Naive thymus-derived CD4-positive, alpha-beta T cell (primary cell): ENCODE measurements at regions of chr12 and their contacts with region 1.

Region 1: DNA sequence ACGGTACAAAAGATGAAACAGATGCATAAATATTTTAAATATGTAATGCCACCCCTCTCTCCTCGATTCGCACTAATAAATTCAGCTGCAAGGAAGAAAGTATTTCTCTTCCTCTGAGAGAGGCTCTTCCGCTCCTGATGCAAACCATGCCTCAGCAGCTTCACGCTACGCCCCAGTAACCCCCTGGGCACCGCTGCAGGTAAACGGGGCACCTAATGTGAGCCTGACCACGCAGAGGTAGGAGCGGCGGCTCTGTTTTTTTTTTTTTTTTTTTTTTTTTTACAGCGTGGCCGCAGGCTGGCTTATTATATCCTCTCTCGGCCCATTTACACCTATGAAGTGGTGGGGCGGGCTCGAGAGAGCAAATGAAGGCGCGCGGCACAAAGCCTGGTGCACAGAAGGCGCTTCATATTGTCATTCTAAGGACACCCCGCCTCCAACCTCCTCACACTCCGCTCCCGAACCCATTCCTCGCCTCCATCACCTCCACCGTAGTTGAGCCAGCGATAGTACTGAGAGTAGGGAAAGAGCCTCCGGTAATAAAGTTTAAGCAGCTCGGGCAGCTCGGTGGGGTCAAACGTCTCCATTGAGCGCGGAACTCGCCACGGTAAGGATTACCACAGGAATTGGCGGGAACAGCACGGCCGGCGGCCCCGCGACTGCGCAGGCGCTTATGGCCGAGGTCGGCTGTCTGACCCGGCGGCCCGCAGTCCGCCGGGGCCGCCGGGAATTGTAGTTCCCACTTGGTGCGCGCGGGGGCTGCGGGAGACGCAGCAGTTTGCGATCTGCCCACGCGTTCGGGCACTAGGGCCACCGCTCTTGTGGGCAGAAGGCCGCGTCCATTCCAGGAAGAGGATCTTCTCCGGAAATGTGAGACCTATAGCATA is at the start of gene PRIM1:
- DNase-seq: peak; percentile 69 to 91 (median 78)
- ATAC-seq: peak; percentile 93
- H3K4me3 ChIP-seq: peak within 1 kb of the TSS; percentile 98
- H3K4me3 Mint-ChIP-seq: peak within 1 kb of the TSS; percentile 88 to 98 (median 97)
- H3K27ac ChIP-seq: peak within 1 kb of the TSS; percentile 81
- H3K27ac Mint-ChIP-seq: peak within 1 kb of the TSS; percentile 80 to 99 (median 93)
- H3K4me1 ChIP-seq: peaks cover 3 to 7% of the 10 kb centered on the region in 2 donors
- H3K4me1 Mint-ChIP-seq: peaks cover 22 to 46% (median 42%) of the 10 kb centered on the region in 7 donors
- H3K27me3 ChIP-seq: no peaks in the 10 kb centered on the region
- H3K27me3 Mint-ChIP-seq: no peaks in the 10 kb centered on the region
- total RNA-seq, gene PRIM1: 11.5 to 39.8 (median 26.2) TPM

Region 2: DNA sequence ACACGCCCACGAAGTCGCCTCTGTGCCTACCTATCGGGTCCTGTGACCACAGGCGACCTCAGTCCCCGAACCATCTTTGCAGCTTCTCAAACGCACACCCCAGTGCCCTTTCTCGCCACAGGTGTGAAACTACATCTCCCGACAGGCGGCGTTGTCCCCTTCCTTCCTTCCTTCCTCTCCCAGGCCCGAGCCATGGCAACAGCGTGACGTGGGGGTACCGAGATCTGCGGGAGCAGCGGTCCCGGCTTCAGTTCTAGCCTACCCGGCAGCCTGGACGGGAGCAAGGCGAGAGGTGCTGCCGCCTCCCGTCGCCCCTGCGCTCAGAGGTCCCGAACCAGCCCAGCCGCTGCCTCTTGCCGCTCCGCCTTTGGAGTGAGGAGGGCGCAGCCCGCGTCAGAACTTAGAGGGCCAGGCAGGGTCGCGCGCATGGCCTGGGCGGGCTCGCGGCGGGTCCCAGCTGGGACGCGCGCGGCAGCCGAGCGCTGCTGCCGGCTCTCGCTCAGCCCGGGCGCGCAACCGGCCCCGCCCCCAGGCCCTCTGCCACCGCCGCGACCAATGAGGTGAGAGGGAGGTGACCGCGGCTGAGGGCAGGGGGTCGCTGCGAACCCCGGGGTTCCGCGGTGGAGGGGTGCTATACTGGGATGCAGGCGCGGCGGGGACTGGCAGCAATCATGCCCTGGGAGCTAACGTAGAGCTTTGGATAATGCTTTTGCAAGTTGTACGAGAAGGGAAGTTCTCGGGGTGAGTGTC is 485.1 kb before region 1 on chr12 and contains the start of gene COQ10A:
- CTCF ChIA-PET with region 1: no interaction called
- POLR2A ChIA-PET with region 1: no interaction called
- intact Hi-C with region 1: no loop called
- DNase-seq: peak; percentile 78 to 92 (median 89)
- ATAC-seq: peak; percentile 93
- H3K4me3 ChIP-seq: peak within 1 kb of the TSS; percentile 88
- H3K4me3 Mint-ChIP-seq: peak within 1 kb of the TSS; percentile 83 to 100 (median 96)
- H3K27ac ChIP-seq: peak within 1 kb of the TSS; percentile 94
- H3K27ac Mint-ChIP-seq: peak within 1 kb of the TSS; percentile 89 to 97 (median 94)
- H3K4me1 ChIP-seq: peaks cover 0 to 8% of the 10 kb centered on the region in 2 donors
- H3K4me1 Mint-ChIP-seq: peaks cover 0 to 22% (median 20%) of the 10 kb centered on the region in 7 donors
- H3K27me3 ChIP-seq: no peaks in the 10 kb centered on the region
- H3K27me3 Mint-ChIP-seq: peaks cover 0 to 2% (median 0%) of the 10 kb centered on the region in 5 donors
- total RNA-seq, gene COQ10A: 22.5 to 39.4 (median 31.5) TPM

Region 3: DNA sequence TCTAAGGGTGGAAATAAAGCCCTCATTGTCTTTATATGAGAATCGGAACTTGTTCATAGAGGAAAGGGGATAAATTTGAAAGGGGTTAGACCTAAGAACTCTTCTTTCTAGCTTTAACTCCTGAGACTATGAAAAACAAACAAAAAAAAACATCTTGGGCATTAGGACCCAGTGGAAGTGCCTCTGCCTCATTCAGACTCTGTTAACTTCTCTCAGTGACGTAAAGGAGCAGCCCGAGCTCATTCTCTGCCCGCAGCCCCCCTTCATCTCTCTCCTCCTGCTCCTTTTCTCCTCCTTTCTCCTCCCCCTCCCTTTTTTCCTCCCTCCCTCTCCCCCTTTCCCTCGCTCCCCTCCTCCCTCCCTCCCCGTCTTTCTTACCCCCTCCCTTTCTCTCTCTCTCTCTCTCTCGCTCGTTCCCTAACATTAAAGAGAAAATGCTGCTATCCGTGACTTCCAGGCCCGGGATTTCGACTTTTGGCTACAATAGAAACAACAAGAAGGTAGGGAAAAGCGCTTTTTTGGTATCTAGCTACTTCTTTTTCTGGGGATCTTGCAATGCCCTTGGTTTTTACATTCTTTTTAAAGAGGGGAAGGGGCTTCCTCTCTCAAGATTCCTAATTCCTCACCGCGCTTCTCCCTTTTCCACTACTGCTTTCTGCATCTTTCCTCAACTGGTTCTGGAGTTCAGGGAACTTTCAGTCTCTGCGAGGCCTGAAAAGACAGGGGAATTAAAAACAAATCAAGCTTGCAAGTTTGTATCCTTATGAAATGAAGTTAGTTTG is 230.2 kb before region 1 on chr12 and contains the start of gene RBMS2:
- CTCF ChIA-PET with region 1: no interaction called
- POLR2A ChIA-PET with region 1: no interaction called
- intact Hi-C with region 1: loop called in 1 of 2 experiments (anchors 2 kb)
- DNase-seq: peak in 8 of 9 donors; percentile 23 to 74 (median 58)
- ATAC-seq: peak; percentile 97
- H3K4me3 ChIP-seq: peak within 1 kb of the TSS; percentile 44
- H3K4me3 Mint-ChIP-seq: peak within 1 kb of the TSS; percentile 79 to 98 (median 91)
- H3K27ac ChIP-seq: peak within 1 kb of the TSS; percentile 70
- H3K27ac Mint-ChIP-seq: peak within 1 kb of the TSS; percentile 60 to 97 (median 82)
- H3K4me1 ChIP-seq: peaks cover 6 to 23% of the 10 kb centered on the region in 2 donors
- H3K4me1 Mint-ChIP-seq: peaks cover 25 to 40% (median 37%) of the 10 kb centered on the region in 7 donors
- H3K27me3 ChIP-seq: no peaks in the 10 kb centered on the region
- H3K27me3 Mint-ChIP-seq: peaks cover 0 to 2% (median 0%) of the 10 kb centered on the region in 5 donors
- total RNA-seq, gene RBMS2: 2.5 to 12.8 (median 5.5) TPM

Region 4: DNA sequence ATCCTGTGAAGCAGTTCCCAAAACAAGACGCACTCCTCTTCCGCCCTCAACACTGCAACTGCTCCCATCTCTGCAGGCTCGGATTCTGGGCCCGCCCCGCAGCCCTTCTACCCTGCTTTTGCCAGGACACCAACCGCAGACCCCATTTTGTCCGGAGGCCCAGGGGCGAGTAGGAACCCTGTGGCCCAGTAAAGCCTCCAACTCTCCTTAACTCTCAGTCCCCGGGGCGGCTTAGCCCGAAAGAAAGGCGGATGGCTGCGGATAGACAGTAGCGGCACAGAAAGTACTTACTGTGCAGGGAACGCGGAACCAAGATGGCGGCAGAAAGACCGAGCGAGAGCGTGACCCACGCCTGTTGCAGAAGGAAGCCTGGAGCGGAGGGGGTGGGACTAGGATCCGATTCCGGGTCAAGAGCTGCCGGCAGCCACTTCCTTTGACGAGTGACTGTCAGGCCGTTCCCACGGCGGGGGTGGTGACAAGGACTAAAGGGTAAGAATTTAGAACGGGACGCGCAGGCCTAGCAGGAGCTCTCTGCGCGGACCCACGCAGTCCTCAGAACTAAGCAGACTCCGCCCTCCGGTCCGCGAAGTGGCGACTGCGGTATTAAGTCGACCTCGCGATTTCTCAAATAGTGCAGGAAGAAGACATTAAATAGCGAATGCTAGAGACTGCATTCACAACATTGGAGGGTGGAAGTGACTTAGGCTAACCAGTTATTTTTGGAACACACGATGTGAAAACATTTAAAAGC is 26.8 kb before region 1 on chr12 and contains the start of gene NACA:
- CTCF ChIA-PET with region 1: interaction called, 6 read pairs
- POLR2A ChIA-PET with region 1: interaction called, 17 read pairs
- intact Hi-C with region 1: loop called (anchors 1 kb)
- DNase-seq: peak; percentile 85 to 99 (median 96)
- ATAC-seq: peak; percentile 95
- H3K4me3 ChIP-seq: peak within 1 kb of the TSS; percentile 100
- H3K4me3 Mint-ChIP-seq: peak within 1 kb of the TSS; percentile 94 to 100 (median 97)
- H3K27ac ChIP-seq: peak within 1 kb of the TSS; percentile 87
- H3K27ac Mint-ChIP-seq: peak within 1 kb of the TSS; percentile 94 to 100 (median 98)
- H3K4me1 ChIP-seq: peaks cover 40 to 43% of the 10 kb centered on the region in 2 donors
- H3K4me1 Mint-ChIP-seq: peaks cover 39 to 53% (median 49%) of the 10 kb centered on the region in 7 donors
- H3K27me3 ChIP-seq: no peaks in the 10 kb centered on the region
- H3K27me3 Mint-ChIP-seq: no peaks in the 10 kb centered on the region
- total RNA-seq, gene NACA: 834 to 1,486 (median 1,355) TPM

Region 5: DNA sequence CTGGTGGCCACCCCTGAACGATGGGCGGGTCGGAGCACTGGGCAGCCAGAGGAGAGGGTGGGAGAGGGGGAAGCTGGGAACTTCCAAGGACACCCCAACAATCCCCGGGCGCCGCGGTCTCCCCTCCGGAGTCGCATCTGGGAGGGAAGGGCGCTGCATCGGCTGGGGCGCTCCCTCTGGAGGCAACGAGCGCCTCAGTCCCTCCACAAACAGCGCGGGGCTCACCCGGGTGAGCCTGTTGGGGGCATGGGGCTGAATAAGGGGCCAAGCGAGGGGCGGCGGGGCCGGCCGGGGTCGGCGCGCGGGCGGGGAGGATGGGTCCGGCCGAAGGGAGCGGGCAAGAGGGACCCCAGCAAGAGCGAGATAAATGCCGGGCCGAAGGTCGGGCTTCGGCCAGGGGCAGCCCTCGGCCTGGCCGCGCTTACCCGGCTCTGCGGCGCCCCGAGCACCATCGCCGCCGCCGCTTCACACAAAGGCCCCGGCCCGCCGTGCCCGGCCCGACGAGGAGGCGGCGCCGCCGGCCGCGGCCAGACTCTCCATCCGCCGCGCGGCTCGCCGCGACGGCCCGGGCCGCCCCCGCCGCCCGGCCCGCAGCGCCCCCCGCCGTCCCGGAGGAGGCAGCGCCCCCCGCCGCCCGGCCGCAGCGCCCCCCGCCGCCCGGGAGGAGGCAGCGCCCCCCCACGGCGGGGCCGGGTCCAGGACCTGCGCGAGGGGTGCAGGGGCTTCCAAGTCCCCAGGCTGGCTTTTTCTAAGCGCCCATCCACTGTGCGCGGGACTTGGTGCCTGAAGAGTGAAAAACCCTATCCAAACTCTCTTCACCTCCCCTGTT is 254.2 kb after region 1 on chr12 and contains the start of gene ZBTB39:
- CTCF ChIA-PET with region 1: interaction called, 8 read pairs
- POLR2A ChIA-PET with region 1: interaction called, 3 read pairs
- intact Hi-C with region 1: loop called (anchors 1 kb)
- DNase-seq: peak; percentile 51 to 84 (median 62)
- ATAC-seq: peak; percentile 91
- H3K4me3 ChIP-seq: peak within 1 kb of the TSS; percentile 63
- H3K4me3 Mint-ChIP-seq: peak within 1 kb of the TSS; percentile 90 to 94 (median 92)
- H3K27ac ChIP-seq: peak within 1 kb of the TSS; percentile 82
- H3K27ac Mint-ChIP-seq: peak within 1 kb of the TSS; percentile 92 to 95 (median 95)
- H3K4me1 ChIP-seq: peaks cover 20 to 46% of the 10 kb centered on the region in 2 donors
- H3K4me1 Mint-ChIP-seq: peaks cover 36 to 80% (median 76%) of the 10 kb centered on the region in 7 donors
- H3K27me3 ChIP-seq: no peaks in the 10 kb centered on the region
- H3K27me3 Mint-ChIP-seq: no peaks in the 10 kb centered on the region
- total RNA-seq, gene ZBTB39: 5.8 to 12.9 (median 10.7) TPM

Region 6: GRCh38 chr12:57069523-57069922 is 317.6 kb after region 1 on chr12:
- CTCF ChIA-PET with region 1: interaction called, 3 read pairs
- POLR2A ChIA-PET with region 1: interaction called, 4 read pairs
- intact Hi-C with region 1: loop called in 1 of 2 experiments (anchors 1 kb)
- DNase-seq: peak in 8 of 9 donors; percentile 42 to 79 (median 72)
- ATAC-seq: peak; percentile 100
- H3K4me3 ChIP-seq: no peak overlapping the region
- H3K4me3 Mint-ChIP-seq: peak overlapping the region in 8 of 10 donors; percentile 4 to 33 (median 20)
- H3K27ac ChIP-seq: peak overlapping the region; percentile 60
- H3K27ac Mint-ChIP-seq: peak overlapping the region; percentile 70 to 89 (median 83)
- H3K4me1 ChIP-seq: peaks cover 4 to 15% of the 10 kb centered on the region in 2 donors
- H3K4me1 Mint-ChIP-seq: peaks cover 13 to 50% (median 30%) of the 10 kb centered on the region in 7 donors
- H3K27me3 ChIP-seq: no peaks in the 10 kb centered on the region
- H3K27me3 Mint-ChIP-seq: no peaks in the 10 kb centered on the region